ENCODE measurements at regions of chr6 and their contacts with region 1.

Region 1: DNA sequence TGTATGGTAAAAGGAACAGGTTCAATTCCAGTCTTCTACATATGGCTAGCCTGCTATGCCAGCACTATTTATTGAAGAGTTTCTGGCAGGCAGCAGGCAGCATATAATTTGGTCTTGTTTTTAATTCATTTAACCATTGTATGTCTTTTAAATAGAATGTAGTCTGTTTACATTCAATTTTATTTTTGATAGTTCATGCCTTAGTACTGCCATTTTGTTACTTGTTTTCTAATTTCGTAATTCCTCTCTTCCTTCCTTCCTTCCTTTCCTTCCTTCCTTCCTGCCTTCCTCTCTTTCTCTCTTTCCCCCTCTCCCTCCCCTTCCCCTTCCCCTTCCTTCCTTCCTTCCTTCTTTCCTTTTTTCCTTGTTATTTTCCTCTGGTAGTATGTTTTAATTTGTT is 17.6 kb upstream of the OR2J2 start:
- DNase-seq: no peak
- ATAC-seq: no peak
- H3K4me3 ChIP-seq: no peak overlapping the region
- H3K27ac ChIP-seq: no peak overlapping the region
- H3K4me1 ChIP-seq: no peaks in the 10 kb centered on the region
- H3K27me3 ChIP-seq: 0 out of 2 replicates have a peak, but pooled peaks cover 5% of the 10 kb centered on the region
- CTCF ChIP-seq: no peak

Region 2: GRCh38 chr6:28802417-28803336 is 350.4 kb before region 1 on chr6:
- CTCF ChIA-PET with region 1: no interaction called
- POLR2A ChIA-PET with region 1: no interaction called
- intact Hi-C with region 1: no loop called
- DNase-seq: peak; percentile 51
- ATAC-seq: peak; percentile 48; the same call in 1 of the 2 replicates
- H3K4me3 ChIP-seq: peak overlapping the region; percentile 56
- H3K27ac ChIP-seq: no peak overlapping the region
- H3K4me1 ChIP-seq: no peaks in the 10 kb centered on the region
- H3K27me3 ChIP-seq: peaks cover 5% of the 10 kb centered on the region; the same call in 1 of the 2 replicates
- CTCF ChIP-seq: no peak

Region 3: DNA sequence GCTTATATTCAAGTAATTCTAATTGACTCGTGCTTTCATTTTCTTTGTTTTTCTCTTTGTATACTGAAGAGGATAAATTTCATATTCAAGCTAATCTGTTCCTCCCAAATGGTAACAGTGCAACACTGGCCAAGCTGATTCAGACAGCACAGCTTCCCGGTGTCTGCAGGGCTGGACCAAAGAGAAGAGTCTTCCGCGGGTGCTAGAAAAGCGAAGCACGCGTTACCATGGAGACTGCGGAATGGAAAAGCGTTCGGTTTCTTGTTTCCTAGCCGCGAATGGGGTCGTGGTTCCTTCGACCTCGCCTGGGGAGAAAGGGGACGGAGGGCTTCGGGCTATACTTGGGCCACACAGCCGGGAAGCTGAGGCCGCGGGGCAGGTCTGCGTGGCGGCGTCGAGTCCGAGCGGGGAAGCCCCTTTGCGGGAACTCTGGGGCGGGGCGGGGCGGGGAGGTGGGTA is 141.8 kb before region 1 on chr6:
- CTCF ChIA-PET with region 1: no interaction called
- POLR2A ChIA-PET with region 1: interaction called, 15 read pairs
- intact Hi-C with region 1: no loop called
- DNase-seq: peak; percentile 53
- ATAC-seq: peak; percentile 85
- H3K4me3 ChIP-seq: peak overlapping the region; percentile 72
- H3K27ac ChIP-seq: no peak overlapping the region
- H3K4me1 ChIP-seq: 0 out of 2 replicates have a peak, but pooled peaks cover 4% of the 10 kb centered on the region
- H3K27me3 ChIP-seq: no peaks in the 10 kb centered on the region
- CTCF ChIP-seq: no peak